ENCODE measurements at regions of chrX and their contacts with region 1.

Region 1: DNA sequence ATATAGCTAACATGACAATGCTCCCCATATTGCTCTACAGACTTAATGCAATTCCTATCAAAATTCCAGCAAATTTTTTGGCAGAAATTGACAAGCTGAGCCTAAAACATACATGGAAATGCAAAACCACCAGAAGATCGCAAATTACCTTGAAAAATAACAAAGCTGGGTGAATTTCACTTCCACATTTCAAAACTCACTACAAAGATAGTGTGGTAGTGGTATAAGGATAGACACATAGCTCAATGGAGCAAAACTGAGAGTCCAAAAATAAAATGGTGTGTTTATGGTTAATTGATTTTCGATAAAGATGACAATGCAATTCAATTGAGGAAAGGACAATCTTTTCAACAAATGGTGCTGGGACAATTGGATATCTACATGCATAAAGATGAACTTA is 65.8 kb downstream of the SLC9A7 start:
- DNase-seq: no peak
- ATAC-seq: no peak
- H3K4me3 ChIP-seq: peak overlapping the region in 1 of 5 experiments; percentile 21
- H3K4me3 Mint-ChIP-seq: peak overlapping the region; percentile 66
- H3K27ac ChIP-seq: no peak overlapping the region
- H3K27ac Mint-ChIP-seq: no peak overlapping the region
- H3K4me1 ChIP-seq: peaks cover 24 to 28% of the 10 kb centered on the region in 2 donors
- H3K4me1 Mint-ChIP-seq: peaks cover 45% of the 10 kb centered on the region
- H3K27me3 ChIP-seq: no peaks in the 10 kb centered on the region
- H3K27me3 Mint-ChIP-seq: no peaks in the 10 kb centered on the region
- CTCF ChIP-seq: no peak

Region 2: GRCh38 chrX:46561824-46562657 is 131.1 kb before region 1 on chrX:
- CTCF ChIA-PET with region 1: no interaction called
- POLR2A ChIA-PET with region 1: no interaction called
- intact Hi-C with region 1: no loop called
- DNase-seq: peak; percentile 64
- ATAC-seq: peak; percentile 97
- H3K4me3 ChIP-seq: no peak overlapping the region
- H3K4me3 Mint-ChIP-seq: peak overlapping the region; percentile 20
- H3K27ac ChIP-seq: no peak overlapping the region
- H3K27ac Mint-ChIP-seq: peak overlapping the region; percentile 59
- H3K4me1 ChIP-seq: peaks cover 14 to 15% of the 10 kb centered on the region in 2 donors
- H3K4me1 Mint-ChIP-seq: peaks cover 17% of the 10 kb centered on the region
- H3K27me3 ChIP-seq: peaks cover 0 to 3% (median 0%) of the 10 kb centered on the region in 4 experiments
- H3K27me3 Mint-ChIP-seq: peaks cover 27% of the 10 kb centered on the region
- CTCF ChIP-seq: no peak

Region 3: GRCh38 chrX:46727441-46727840 is 34.3 kb after region 1 on chrX:
- CTCF ChIA-PET with region 1: no interaction called
- POLR2A ChIA-PET with region 1: no interaction called
- intact Hi-C with region 1: loop called (anchors 5 kb)
- DNase-seq: no peak
- ATAC-seq: no peak
- H3K4me3 ChIP-seq: no peak overlapping the region
- H3K4me3 Mint-ChIP-seq: no peak overlapping the region
- H3K27ac ChIP-seq: no peak overlapping the region
- H3K27ac Mint-ChIP-seq: no peak overlapping the region
- H3K4me1 ChIP-seq: peaks cover 12% of the 10 kb centered on the region in 2 donors
- H3K4me1 Mint-ChIP-seq: peaks cover 50% of the 10 kb centered on the region
- H3K27me3 ChIP-seq: no peaks in the 10 kb centered on the region
- H3K27me3 Mint-ChIP-seq: no peaks in the 10 kb centered on the region
- CTCF ChIP-seq: no peak

Region 4: DNA sequence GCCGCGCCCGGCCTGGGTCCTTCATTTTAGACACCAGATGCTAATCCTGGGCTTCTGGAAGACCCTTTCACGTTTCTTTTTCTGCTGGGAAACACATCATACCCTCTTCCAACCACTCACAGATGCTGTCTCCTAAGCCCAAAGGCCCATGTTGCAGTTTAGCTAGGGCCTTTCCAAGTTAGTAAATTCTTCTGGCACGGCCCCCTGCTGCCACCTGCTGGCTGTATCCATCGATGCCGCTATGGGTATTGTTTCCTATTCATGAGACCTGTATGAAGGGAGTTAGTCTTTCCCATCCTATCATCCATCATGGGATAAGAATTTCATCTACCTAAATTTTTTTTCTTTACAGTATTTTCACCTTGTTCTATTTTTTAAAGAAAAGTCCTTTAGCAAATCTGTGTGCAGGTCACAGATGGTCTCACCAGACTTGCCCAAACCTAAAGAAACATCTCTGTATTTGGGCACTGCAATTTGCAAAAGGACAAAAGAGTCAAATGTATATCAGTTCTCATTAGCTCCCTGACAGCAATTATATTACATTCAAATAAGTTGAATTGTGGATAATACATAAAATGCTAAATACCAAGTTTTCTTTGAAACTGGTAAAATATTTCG is 103.5 kb after region 1 on chrX:
- CTCF ChIA-PET with region 1: interaction called, 3 read pairs
- POLR2A ChIA-PET with region 1: no interaction called
- intact Hi-C with region 1: loop called (anchors 5 kb)
- DNase-seq: peak; percentile 77
- ATAC-seq: no peak
- H3K4me3 ChIP-seq: no peak overlapping the region
- H3K4me3 Mint-ChIP-seq: no peak overlapping the region
- H3K27ac ChIP-seq: no peak overlapping the region
- H3K27ac Mint-ChIP-seq: no peak overlapping the region
- H3K4me1 ChIP-seq: peaks cover 0 to 8% of the 10 kb centered on the region in 2 donors
- H3K4me1 Mint-ChIP-seq: peaks cover 15% of the 10 kb centered on the region
- H3K27me3 ChIP-seq: no peaks in the 10 kb centered on the region
- H3K27me3 Mint-ChIP-seq: no peaks in the 10 kb centered on the region
- CTCF ChIP-seq: peak; percentile 73